ENCODE measurements at regions of chr1 and their contacts with region 1.

Region 1: GRCh38 chr1:168637350-168637991 is 61.1 kb downstream of the XCL1 start:
- DNase-seq: no peak
- ATAC-seq: peak; percentile 94
- H3K4me3 Mint-ChIP-seq: no peak overlapping the region
- H3K27ac Mint-ChIP-seq: no peak overlapping the region
- H3K4me1 Mint-ChIP-seq: peaks cover 3% of the 10 kb centered on the region; the same call in 1 of the 2 replicates
- H3K27me3 Mint-ChIP-seq: no peaks in the 10 kb centered on the region; the same call in 1 of the 2 replicates
- CTCF ChIP-seq: peak; percentile 66

Region 2: DNA sequence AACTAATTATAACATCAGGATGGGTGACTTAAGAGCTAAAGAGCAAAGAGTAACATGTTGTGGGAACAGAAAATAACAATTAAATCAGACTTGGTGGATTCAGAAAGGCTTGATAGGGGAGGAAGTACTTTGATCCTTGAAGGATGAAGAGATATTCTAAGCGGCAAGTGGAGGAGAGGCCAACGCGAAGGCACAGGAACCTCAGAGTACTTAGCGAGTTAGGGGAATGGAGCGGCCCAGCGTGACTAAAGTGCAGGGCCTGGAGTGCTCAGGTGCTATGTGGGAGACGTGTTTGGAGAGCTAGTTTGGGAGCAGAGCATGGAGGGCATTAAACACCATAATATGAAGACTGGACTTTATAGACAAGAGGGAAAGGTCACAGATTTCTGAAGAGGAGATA is 787.8 kb before region 1 on chr1:
- CTCF ChIA-PET with region 1: no interaction called
- POLR2A ChIA-PET with region 1: no interaction called
- DNase-seq: no peak
- ATAC-seq: no peak
- H3K4me3 Mint-ChIP-seq: no peak overlapping the region
- H3K27ac Mint-ChIP-seq: no peak overlapping the region
- H3K4me1 Mint-ChIP-seq: peaks cover 5% of the 10 kb centered on the region
- H3K27me3 Mint-ChIP-seq: no peaks in the 10 kb centered on the region
- CTCF ChIP-seq: no peak

Region 3: DNA sequence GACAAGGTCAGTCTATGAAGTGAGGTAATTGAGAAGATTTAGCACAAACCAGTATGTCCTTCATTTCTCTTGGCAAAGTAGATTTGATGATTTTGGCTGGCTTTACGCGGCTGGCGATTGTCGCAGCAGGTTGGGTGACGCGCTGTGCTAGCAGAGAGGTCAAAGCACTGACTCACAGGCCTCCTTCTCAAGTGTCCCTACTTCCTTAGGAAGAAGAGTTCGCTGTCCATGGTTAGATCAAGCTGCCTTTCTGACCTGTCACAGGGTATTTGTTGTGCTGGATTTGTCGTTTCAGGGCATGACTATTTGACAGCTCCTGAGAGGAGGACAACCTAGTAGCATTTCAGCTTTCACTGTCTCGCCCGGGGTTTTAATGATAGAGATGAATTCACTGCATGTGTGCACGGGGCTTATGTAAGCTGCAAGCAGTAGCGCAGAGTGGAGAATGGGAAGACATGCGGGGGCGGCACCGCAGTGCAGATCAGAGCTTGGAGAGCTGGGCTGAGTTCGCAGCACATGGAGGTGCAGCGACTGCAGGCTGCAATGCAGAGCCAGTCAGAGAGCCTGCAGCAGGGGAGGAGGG is 28.2 kb before region 1 on chr1:
- CTCF ChIA-PET with region 1: interaction called, 17 read pairs
- POLR2A ChIA-PET with region 1: no interaction called
- DNase-seq: peak; percentile 18
- ATAC-seq: peak; percentile 74
- H3K4me3 Mint-ChIP-seq: no peak overlapping the region
- H3K27ac Mint-ChIP-seq: no peak overlapping the region
- H3K4me1 Mint-ChIP-seq: peaks cover 15% of the 10 kb centered on the region
- H3K27me3 Mint-ChIP-seq: no peaks in the 10 kb centered on the region; the same call in 1 of the 2 replicates
- CTCF ChIP-seq: no peak

Region 4: GRCh38 chr1:168653567-168653966 is 16.1 kb after region 1 on chr1:
- CTCF ChIA-PET with region 1: interaction called, 20 read pairs
- POLR2A ChIA-PET with region 1: no interaction called
- DNase-seq: no peak
- ATAC-seq: no peak
- H3K4me3 Mint-ChIP-seq: no peak overlapping the region
- H3K27ac Mint-ChIP-seq: no peak overlapping the region
- H3K4me1 Mint-ChIP-seq: peaks cover 8% of the 10 kb centered on the region
- H3K27me3 Mint-ChIP-seq: no peaks in the 10 kb centered on the region
- CTCF ChIP-seq: no peak